ENCODE measurements at regions of chr17 and their contacts with region 1.

Region 1: DNA sequence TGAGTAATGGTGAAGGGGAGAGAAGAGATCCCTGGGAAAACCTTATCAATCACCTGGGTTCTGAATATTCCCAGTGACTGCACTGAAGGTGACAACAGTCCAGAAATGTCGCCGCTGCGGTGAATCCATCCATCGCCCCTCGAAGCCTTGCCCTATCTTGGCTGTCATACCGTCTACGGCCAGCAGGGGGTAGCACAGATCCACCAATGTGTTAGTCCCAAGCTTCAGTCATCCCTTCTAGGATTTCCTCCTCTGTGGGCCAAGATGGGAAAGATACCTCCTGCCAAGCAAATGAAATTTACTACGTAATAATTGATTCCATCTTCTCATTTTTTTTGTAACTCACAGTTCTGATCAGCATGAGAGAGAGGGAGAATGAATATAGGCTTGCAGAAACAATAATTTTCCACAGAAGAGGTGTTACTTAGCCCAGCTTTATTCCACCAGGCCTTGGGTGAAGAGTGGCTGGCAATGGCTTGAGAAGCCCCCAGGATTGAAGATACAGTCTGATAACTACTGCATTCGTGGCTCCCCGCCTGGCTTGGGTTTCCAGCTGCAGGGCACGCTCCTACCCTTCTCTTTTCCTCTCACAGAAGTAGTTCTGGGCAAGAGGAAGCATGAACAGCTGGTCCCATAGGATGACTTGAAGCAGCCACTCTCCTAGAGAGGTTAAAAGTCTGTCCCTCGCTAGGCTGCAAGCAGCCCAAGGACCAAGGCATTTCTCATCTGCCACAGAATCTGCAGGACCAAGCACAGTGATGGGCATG is 2.6 kb upstream of the FMNL1 start:
- DNase-seq: peak; percentile 85 to 87
- H3K4me3 ChIP-seq: no peak overlapping the region
- H3K27ac ChIP-seq: no peak overlapping the region
- H3K4me1 ChIP-seq: peaks cover 0 to 10% of the 10 kb centered on the region in 2 donors
- H3K27me3 ChIP-seq: no peaks in the 10 kb centered on the region
- CTCF ChIP-seq: peak; percentile 86 to 96 (median 94)
- POLR2A ChIP-seq: no peak

Region 2: DNA sequence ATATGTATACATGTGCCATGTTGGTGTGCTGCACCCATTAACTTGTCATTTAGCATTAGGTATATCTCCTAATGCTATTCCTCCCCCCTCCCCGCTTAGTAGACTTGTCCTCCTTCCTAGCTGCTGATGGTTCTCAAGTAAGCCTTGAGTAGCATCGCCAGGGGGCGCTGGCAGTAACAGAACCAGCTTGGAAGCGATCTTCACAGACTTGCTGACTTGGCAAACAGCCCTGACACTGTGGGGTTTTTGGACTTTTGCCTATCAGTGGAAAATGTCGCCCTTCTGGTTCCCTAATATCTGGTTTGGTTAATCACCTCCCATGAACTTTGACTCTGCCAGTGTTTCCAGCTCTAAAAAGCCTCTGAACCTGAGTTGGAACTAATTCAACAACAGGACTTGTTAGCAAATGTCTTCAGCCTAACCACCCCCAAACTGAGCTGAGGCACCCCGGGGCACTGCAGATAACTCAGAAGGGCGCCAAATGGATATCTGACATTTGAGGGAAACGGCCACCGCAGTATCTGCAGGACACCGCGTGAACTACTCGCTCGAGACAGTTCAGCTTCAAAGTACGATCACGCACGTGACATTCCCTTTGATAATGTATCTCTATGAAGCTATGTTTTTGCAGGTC is 58.3 kb after region 1 on chr17:
- intact Hi-C with region 1: loop called (anchors 5 kb)
- DNase-seq: peak; percentile 97 to 98
- H3K4me3 ChIP-seq: no peak overlapping the region
- H3K27ac ChIP-seq: peak overlapping the region; percentile 2 to 69 (median 38)
- H3K4me1 ChIP-seq: peaks cover 14 to 16% of the 10 kb centered on the region in 2 donors
- H3K27me3 ChIP-seq: no peaks in the 10 kb centered on the region
- CTCF ChIP-seq: peak; percentile 27 to 94 (median 84)
- POLR2A ChIP-seq: no peak

Region 3: GRCh38 chr17:45287526-45288500 is 68.7 kb after region 1 on chr17:
- intact Hi-C with region 1: no loop called
- DNase-seq: peak in 1 of 2 donors; percentile 71
- H3K4me3 ChIP-seq: no peak overlapping the region
- H3K27ac ChIP-seq: peak overlapping the region in 1 of 3 donors; percentile 79
- H3K4me1 ChIP-seq: peaks cover 54 to 60% of the 10 kb centered on the region in 2 donors
- H3K27me3 ChIP-seq: no peaks in the 10 kb centered on the region
- CTCF ChIP-seq: no peak
- POLR2A ChIP-seq: no peak

Region 4: DNA sequence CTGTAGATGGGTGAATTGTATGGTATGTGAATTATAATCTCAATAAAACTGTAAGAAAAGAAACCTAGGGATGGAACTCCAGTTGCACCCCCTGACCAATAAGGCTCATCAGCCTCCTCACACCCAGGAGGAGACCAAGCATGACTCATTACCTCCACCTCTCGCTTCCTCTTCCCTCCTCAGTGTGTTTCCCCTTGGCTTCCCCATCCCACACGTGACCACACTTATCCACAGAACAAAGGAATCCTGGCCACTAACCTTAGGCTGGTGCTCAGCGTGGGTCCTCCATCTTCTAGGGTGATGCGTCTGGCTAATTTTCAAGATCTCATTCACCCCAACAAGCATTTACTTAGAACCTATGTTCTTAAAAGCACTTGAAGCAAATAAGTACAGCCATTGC is 134.0 kb after region 1 on chr17:
- intact Hi-C with region 1: no loop called
- DNase-seq: no peak
- H3K4me3 ChIP-seq: no peak overlapping the region
- H3K27ac ChIP-seq: no peak overlapping the region
- H3K4me1 ChIP-seq: no peaks in the 10 kb centered on the region
- H3K27me3 ChIP-seq: no peaks in the 10 kb centered on the region
- CTCF ChIP-seq: no peak
- POLR2A ChIP-seq: no peak

Region 5: DNA sequence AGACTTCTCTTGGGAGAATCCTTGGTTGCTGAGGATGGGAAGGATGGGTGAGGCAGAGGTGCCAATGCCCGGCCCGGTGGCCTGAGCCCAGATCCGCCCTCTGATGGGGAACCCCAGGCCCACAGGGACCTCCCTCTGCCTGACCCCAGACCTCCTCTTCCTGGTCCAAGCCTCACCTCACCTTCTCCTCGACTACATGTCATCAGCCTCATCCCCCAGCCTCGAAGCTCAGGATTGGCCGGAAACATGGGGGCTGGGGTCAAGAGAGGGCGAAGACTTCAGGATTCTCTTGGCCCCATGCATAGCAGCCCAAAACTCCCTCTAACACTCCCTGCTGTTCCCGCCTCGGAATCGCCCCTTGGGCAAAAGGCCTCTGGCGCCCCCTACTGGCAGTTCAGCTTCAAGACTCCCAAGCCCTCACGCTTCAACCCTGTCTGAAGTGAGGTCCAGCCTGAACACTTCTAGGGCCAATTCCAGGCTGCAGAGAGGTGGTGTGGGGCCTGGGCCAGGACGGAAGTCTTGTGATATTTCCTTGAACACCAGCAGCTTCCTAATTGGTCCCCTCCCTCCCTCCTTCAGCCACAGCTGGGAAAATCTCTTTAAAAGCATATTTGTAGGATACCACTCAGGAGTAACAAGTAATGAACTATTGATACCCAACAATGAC is 166.4 kb after region 1 on chr17:
- intact Hi-C with region 1: loop called (anchors 2 kb)
- DNase-seq: peak; percentile 84 to 91
- H3K4me3 ChIP-seq: no peak overlapping the region
- H3K27ac ChIP-seq: no peak overlapping the region
- H3K4me1 ChIP-seq: peaks cover 0 to 15% of the 10 kb centered on the region in 2 donors
- H3K27me3 ChIP-seq: no peaks in the 10 kb centered on the region
- CTCF ChIP-seq: peak; percentile 92 to 97 (median 96)
- POLR2A ChIP-seq: no peak

Region 6: DNA sequence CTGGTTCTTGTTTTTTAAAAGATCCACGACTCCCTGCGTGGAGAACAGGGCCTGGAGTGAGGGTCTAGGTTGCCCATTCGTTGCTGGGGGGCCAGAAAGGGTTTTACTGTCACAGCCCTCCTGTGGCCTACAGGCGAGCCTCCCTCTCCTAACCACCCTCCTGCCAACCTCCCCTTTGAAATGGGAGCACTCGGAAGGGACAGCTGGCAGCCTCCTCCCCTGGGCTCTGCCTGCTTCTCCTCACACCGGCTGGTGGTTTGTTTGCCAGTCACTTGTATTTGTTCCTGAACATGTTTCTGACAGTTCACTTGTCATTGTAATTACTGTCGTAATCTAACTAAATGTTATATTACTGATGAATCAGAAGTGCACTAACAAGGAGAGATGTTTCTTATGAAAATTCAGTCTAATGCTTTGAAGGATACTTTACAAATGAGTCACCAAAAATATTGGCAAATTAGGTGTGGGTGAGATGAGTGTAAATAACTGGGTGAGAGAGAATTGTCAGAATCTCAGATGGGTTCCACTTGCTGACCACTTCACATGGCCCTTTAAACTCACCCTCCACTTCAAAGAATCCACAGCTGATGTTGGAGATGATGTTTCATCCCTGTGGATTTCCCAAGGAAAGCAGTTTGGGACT is 622.9 kb after region 1 on chr17:
- intact Hi-C with region 1: loop called (anchors 10 kb)
- DNase-seq: no peak
- H3K4me3 ChIP-seq: no peak overlapping the region
- H3K27ac ChIP-seq: no peak overlapping the region
- H3K4me1 ChIP-seq: no peaks in the 10 kb centered on the region
- H3K27me3 ChIP-seq: no peaks in the 10 kb centered on the region
- CTCF ChIP-seq: no peak
- POLR2A ChIP-seq: no peak

Measured in thyroid gland (tissue), 4 donors.